Activated CD4-positive, alpha-beta T cell treated with anti-CD3 and anti-CD28 coated beads, Interleukin-2, amount 10 ng/mL, durations not matched to agents 24 days and 14 days (primary cell): ENCODE measurements at regions of chr4 and their contacts with region 1.

Region 1: DNA sequence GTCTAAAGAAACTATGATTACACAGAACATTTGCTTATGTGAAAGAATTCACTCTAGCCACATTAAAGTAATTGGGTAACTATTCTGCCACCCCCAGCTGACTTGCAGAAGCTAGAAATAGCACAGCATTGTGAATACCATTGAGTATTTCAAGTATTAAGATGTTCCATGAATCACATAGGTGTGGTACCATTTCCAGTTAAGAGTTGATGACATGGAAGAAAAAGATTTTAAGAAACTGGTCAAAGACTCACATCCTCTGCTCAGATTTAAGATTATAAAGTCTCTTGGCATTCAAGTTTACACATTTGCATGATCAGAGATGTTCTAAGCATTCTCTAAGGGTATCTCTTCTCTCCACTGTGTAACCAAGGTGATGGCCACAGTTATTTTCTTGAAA is 287.5 kb downstream of the CAMK2D start:
- DNase-seq: no peak
- H3K4me3 Mint-ChIP-seq: no peak overlapping the region
- H3K27ac Mint-ChIP-seq: peak overlapping the region; percentile 79
- H3K4me1 Mint-ChIP-seq: peaks cover 27% of the 10 kb centered on the region
- H3K27me3 Mint-ChIP-seq: no peaks in the 10 kb centered on the region

Region 2: DNA sequence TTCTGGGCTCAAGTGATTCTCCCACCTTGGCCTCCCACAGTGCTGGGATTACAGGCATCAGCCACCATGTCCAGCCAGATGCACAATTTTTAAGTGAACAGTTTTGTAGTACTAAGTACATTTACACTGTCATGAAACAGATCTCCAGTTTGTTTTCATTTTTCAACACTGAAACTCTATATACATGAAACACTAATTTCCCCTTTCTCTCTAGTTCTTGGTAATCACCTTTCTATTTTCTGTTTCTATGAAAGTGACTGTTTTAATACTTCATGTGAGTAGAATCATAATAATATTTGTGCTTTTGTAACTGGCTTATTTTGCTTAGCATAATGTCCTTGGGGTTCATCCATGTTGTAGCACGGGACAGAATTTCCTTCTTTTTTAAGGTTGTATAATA is 50.1 kb after region 1 on chr4:
- intact Hi-C with region 1: loop called (anchors 5 kb)
- DNase-seq: no peak
- H3K4me3 Mint-ChIP-seq: no peak overlapping the region
- H3K27ac Mint-ChIP-seq: peak overlapping the region; percentile 48
- H3K4me1 Mint-ChIP-seq: peaks cover 12% of the 10 kb centered on the region
- H3K27me3 Mint-ChIP-seq: no peaks in the 10 kb centered on the region